ENCODE measurements at regions of chr7 and their contacts with region 1.

Region 1: GRCh38 chr7:113610572-113610971 is 308.2 kb downstream of the PPP1R3A start:
- DNase-seq: no peak
- H3K4me3 Mint-ChIP-seq: no peak overlapping the region
- H3K27ac Mint-ChIP-seq: no peak overlapping the region
- H3K4me1 Mint-ChIP-seq: no peaks in the 10 kb centered on the region
- H3K27me3 Mint-ChIP-seq: no peaks in the 10 kb centered on the region

Region 2: DNA sequence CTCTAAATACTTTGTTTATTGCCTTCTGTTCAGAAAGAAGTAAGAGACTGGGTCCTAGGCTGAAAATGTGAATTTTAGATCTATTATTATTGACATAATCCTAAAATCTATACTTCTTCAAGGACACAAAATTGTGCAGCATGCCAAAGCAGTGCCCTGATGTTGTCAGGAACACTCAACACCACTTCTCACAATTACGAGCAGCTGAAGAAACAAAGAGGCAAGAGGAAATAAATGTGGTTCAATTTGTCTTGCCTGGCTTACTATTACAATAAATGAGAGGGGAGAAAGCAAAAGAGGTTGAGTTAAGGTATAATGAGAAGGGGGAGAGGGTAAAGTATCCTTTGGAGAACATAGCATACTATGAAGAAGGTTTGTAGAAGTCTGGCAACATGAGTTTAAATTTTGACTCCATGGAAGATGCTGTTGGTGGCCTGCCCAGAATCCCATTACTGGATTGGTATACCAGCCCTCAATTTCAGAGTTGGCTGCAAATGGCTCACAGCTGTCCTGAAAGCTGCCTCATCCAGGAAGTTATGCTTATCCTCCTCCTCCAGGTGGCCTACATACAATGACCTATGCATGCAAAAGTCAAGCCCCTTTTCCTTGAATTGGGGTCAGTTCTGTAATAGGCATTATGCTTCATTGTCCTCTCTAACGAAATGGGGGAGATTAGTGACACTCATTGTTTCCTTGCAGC is 217.6 kb before region 1 on chr7:
- CTCF ChIA-PET with region 1: no interaction called
- intact Hi-C with region 1: no loop called
- DNase-seq: no peak
- H3K4me3 Mint-ChIP-seq: no peak overlapping the region
- H3K27ac Mint-ChIP-seq: no peak overlapping the region
- H3K4me1 Mint-ChIP-seq: no peaks in the 10 kb centered on the region
- H3K27me3 Mint-ChIP-seq: peaks cover 8% of the 10 kb centered on the region

Region 3: DNA sequence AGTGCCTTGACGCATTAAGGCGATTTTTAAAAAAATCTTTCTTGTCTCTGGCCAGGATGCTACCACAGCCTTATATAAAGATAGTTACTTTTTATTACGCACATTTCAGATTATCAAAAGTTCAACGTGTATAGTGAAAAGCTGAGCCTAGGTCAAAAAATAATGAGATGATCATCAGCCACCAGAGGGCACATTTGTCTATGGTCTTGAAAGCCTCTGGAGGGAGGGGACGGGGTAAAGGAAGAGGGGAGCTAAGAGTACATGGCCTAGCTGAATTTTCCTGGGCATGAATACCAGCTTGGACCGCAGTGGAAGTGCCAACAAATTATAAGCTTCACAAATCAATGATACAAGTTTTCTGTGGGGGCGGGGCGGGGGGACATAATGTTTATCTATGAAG is 206.3 kb before region 1 on chr7:
- CTCF ChIA-PET with region 1: no interaction called
- intact Hi-C with region 1: no loop called
- DNase-seq: no peak
- H3K4me3 Mint-ChIP-seq: no peak overlapping the region
- H3K27ac Mint-ChIP-seq: no peak overlapping the region
- H3K4me1 Mint-ChIP-seq: no peaks in the 10 kb centered on the region
- H3K27me3 Mint-ChIP-seq: peaks cover 19% of the 10 kb centered on the region

Region 4: DNA sequence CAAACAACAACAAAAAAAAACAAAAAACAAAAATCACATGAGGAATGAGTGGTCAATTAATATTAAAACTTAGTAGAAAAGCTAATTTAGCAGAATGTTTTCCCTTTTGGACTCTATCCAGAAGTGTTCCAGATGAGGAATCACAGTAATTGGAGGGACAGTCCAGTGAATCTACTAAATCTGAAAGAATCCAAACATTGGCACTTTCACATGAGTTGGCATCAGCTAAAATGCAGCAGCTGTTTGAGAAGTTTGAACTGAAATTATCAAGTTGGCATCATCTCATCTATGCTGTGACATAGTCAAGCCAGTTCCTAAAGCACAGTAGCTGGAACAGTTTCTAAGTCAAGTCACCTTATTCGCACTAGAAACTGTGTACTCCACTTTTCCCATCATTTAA is 59.6 kb before region 1 on chr7:
- CTCF ChIA-PET with region 1: no interaction called
- intact Hi-C with region 1: loop called (anchors 10 kb)
- DNase-seq: no peak
- H3K4me3 Mint-ChIP-seq: no peak overlapping the region
- H3K27ac Mint-ChIP-seq: no peak overlapping the region
- H3K4me1 Mint-ChIP-seq: no peaks in the 10 kb centered on the region
- H3K27me3 Mint-ChIP-seq: no peaks in the 10 kb centered on the region

Region 5: DNA sequence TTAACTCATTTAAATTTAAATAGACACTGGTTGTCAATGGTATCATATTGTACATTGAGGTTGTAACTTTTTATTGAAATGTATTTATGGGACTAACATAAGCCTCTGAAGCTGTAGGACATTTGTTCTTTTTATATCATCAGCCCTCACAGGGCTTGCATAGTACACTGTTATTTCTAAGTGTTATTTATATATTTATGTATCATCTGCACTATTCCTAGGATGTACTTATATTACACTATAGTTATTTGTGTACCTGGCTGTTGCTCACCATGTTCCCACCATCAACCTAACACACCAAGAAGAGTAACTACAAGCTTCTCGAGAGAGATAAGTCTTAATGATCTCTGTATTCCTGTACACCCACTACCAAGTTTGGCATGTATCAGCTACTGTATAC is 83.6 kb after region 1 on chr7:
- CTCF ChIA-PET with region 1: no interaction called
- intact Hi-C with region 1: no loop called
- DNase-seq: no peak
- H3K4me3 Mint-ChIP-seq: no peak overlapping the region
- H3K27ac Mint-ChIP-seq: no peak overlapping the region
- H3K4me1 Mint-ChIP-seq: no peaks in the 10 kb centered on the region
- H3K27me3 Mint-ChIP-seq: no peaks in the 10 kb centered on the region